PC-3 (cell line): ENCODE measurements at regions of chr10 and their contacts with region 1.

Region 1: GRCh38 chr10:4691776-4692175 is 134.2 kb upstream of the AKR1E2 start:
- DNase-seq: peak; percentile 71
- ATAC-seq: peak; percentile 82
- H3K4me3 ChIP-seq: no peak overlapping the region
- H3K27ac ChIP-seq: peak overlapping the region; percentile 100
- H3K4me1 ChIP-seq: peaks cover 38% of the 10 kb centered on the region
- H3K27me3 ChIP-seq: no peaks in the 10 kb centered on the region
- CTCF ChIP-seq: no peak

Region 2: DNA sequence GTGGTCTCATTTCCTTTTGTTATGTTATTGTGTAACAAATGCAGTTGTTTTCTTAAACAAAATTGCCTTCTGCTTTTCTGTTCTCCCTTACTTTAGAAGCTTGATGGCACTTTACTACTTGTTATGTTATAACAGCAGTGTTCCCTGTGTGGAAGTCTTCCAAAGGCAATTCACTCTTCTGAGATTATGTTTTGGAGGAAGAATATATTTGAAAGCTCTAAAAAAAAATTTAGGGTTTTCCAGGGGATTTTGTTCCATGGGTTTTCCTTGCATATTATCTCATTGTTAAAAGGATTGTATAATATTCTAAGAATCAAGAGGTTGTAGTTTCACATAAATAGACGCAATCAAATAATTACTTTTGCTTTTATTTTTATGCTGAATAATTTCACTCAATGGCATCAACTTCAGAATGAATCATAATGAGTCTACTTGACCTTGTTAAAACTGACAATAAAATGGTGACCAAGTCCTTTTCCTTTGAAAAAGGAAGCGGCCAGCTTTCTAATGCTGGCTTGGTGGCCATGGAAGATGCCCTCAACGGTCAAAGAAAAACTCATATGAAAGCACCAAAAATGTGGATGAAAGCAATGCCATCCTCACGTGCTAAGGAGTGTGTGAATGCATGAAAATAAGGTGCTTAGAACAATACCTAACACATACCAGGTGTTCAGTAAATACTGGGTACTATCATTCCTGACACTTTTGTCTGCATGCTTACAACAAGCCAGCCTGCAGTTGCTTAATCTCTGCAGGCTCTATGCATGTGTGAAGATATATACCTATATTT is 814.4 kb before region 1 on chr10:
- CTCF ChIA-PET with region 1: no interaction called
- POLR2A ChIA-PET with region 1: interaction called, 19 read pairs
- intact Hi-C with region 1: no loop called
- DNase-seq: peak; percentile 4
- ATAC-seq: peak; percentile 43
- H3K4me3 ChIP-seq: no peak overlapping the region
- H3K27ac ChIP-seq: no peak overlapping the region
- H3K4me1 ChIP-seq: no peaks in the 10 kb centered on the region; the same call in 1 of the 2 replicates
- H3K27me3 ChIP-seq: no peaks in the 10 kb centered on the region
- CTCF ChIP-seq: no peak

Region 3: DNA sequence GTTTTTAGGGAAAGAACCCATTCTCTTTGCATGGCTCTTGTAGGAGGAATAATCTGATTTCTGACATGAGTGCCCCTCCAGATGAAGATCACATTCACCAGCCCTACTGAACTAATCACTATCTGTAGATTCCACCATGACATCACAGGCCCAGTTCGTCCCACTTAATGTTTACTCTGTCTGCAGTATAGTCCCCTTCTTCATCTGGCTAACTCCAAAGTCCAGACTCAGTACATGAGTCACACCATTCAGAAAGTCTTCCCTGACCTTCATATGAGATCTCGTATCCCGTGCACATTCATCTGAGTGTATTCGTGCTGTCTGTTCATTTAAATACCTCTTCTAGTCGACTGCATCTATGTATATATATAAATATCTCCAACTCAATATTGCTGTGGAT is 232.2 kb before region 1 on chr10:
- CTCF ChIA-PET with region 1: no interaction called
- POLR2A ChIA-PET with region 1: no interaction called
- intact Hi-C with region 1: no loop called
- DNase-seq: no peak
- ATAC-seq: no peak
- H3K4me3 ChIP-seq: no peak overlapping the region
- H3K27ac ChIP-seq: no peak overlapping the region
- H3K4me1 ChIP-seq: no peaks in the 10 kb centered on the region
- H3K27me3 ChIP-seq: no peaks in the 10 kb centered on the region
- CTCF ChIP-seq: no peak

Region 4: DNA sequence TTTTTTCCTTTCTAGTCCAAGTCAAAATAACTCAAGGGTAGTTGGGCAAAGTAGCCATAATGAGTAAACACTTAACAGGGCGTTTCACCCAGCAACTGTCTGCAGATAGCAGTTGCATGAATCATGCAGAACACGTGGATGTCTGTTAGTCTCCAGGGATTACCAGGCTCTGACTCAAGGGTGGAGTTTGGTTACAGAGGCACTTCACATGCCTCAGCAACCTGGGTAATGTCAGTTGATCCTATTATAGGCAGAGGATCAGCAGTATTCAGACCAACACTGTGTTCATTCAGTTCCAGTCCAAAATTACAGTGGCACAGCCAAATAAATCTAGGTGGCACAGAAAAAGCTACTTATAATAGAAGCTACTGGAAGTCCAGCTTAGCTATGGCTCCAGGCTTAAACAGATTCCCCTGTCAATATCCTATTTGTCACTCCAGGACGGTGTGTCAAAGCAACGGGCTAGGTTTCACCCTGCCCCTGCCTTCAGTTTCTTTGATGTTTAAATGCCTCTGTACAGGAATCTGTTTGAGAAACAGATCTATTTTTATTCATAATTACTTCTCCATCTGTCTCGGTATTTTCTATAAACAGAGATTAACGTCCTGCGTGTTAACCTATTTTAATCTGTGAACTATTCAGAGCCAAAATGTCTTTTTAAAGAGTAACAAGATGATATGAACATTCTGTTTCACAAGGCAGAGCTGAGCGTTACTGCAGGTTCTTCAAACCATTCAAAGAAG is 28.4 kb before region 1 on chr10:
- CTCF ChIA-PET with region 1: interaction called, 4 read pairs
- POLR2A ChIA-PET with region 1: interaction called, 14 read pairs
- intact Hi-C with region 1: loop called (anchors 2 kb)
- DNase-seq: peak; percentile 93
- ATAC-seq: peak; percentile 93
- H3K4me3 ChIP-seq: no peak overlapping the region
- H3K27ac ChIP-seq: peak overlapping the region; percentile 98
- H3K4me1 ChIP-seq: peaks cover 45% of the 10 kb centered on the region
- H3K27me3 ChIP-seq: no peaks in the 10 kb centered on the region
- CTCF ChIP-seq: no peak

Region 5: GRCh38 chr10:4678023-4678950 is 13.5 kb before region 1 on chr10:
- CTCF ChIA-PET with region 1: interaction called, 6 read pairs
- POLR2A ChIA-PET with region 1: interaction called, 6 read pairs
- intact Hi-C with region 1: loop called (anchors 1 kb)
- DNase-seq: peak; percentile 80
- ATAC-seq: peak; percentile 87
- H3K4me3 ChIP-seq: peak overlapping the region; percentile 74
- H3K27ac ChIP-seq: peak overlapping the region; percentile 99
- H3K4me1 ChIP-seq: peaks cover 46% of the 10 kb centered on the region
- H3K27me3 ChIP-seq: no peaks in the 10 kb centered on the region
- CTCF ChIP-seq: no peak